Activated CD4-positive, alpha-beta memory T cell treated with anti-CD3 and anti-CD28 coated beads, Interleukin-2, amount 10 ng/mL, durations not matched to agents 7 days and 5 days (primary cell): ENCODE measurements at regions of chr1 and their contacts with region 1.

Region 1: DNA sequence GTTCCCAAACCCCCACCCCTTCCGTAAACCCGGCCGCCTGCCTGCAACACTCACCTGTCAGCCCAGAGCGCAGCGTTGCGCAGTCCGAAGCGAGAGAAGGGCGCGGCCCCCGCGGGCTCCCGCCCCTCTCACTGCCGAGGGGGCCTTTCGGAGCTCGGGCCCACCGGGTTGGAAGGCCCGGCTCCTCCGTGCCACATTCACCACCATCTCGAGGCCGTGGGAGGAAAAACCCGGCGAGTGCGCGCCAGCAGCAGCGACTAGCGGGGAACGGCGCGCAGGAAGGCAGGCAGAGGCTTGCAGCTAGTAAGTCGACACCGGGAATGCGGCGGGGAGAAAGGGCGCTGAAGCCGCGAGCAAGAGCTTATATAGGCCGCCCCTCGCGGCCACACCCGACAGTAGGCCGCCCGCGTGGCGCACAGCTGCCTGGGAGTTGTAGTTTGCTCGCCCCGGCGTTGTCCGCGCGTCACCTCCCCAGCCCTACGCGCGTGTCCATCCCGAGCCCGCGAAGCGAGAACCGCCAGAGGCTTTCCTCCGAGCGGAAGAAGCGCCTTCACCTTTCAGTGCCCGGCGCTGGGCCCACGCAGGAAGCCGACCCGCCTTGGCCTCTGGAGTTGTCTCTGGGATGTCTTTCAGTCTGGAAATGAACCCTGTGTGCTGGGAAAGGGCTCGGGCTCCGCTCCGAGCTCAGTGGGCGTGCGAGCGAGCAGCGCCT is 10.4 kb upstream of the RAB42 start:
- DNase-seq: peak; percentile 95
- H3K4me3 Mint-ChIP-seq: peak overlapping the region; percentile 92
- H3K27ac Mint-ChIP-seq: peak overlapping the region; percentile 92
- H3K4me1 Mint-ChIP-seq: peaks cover 38% of the 10 kb centered on the region
- H3K27me3 Mint-ChIP-seq: no peaks in the 10 kb centered on the region

Region 2: GRCh38 chr1:28235755-28236655 is 345.7 kb before region 1 on chr1 and contains the start of gene ATP5IF1:
- CTCF ChIA-PET with region 1: interaction called, 3 read pairs
- POLR2A ChIA-PET with region 1: interaction called, 11 read pairs
- DNase-seq: peak; percentile 96
- H3K4me3 Mint-ChIP-seq: no peak within 1 kb of the TSS
- H3K27ac Mint-ChIP-seq: no peak within 1 kb of the TSS
- H3K4me1 Mint-ChIP-seq: peaks cover 25% of the 10 kb centered on the region
- H3K27me3 Mint-ChIP-seq: no peaks in the 10 kb centered on the region
- total RNA-seq, gene ATP5IF1: 178 TPM

Region 3: GRCh38 chr1:28437934-28438699 is 143.6 kb before region 1 on chr1:
- CTCF ChIA-PET with region 1: no interaction called
- POLR2A ChIA-PET with region 1: no interaction called
- DNase-seq: no peak
- H3K4me3 Mint-ChIP-seq: no peak overlapping the region
- H3K27ac Mint-ChIP-seq: peak overlapping the region; percentile 3
- H3K4me1 Mint-ChIP-seq: peaks cover 16% of the 10 kb centered on the region
- H3K27me3 Mint-ChIP-seq: no peaks in the 10 kb centered on the region

Region 4: GRCh38 chr1:28449904-28450303 is 131.8 kb before region 1 on chr1:
- CTCF ChIA-PET with region 1: no interaction called
- POLR2A ChIA-PET with region 1: interaction called, 11 read pairs
- DNase-seq: peak; percentile 68
- H3K4me3 Mint-ChIP-seq: no peak overlapping the region
- H3K27ac Mint-ChIP-seq: peak overlapping the region; percentile 80
- H3K4me1 Mint-ChIP-seq: peaks cover 29% of the 10 kb centered on the region
- H3K27me3 Mint-ChIP-seq: no peaks in the 10 kb centered on the region

Region 5: GRCh38 chr1:28552758-28553663 is 28.7 kb before region 1 on chr1 and contains the start of gene TRNAU1AP:
- CTCF ChIA-PET with region 1: interaction called, 36 read pairs
- POLR2A ChIA-PET with region 1: interaction called, 185 read pairs
- DNase-seq: peak; percentile 98
- H3K4me3 Mint-ChIP-seq: peak within 1 kb of the TSS; percentile 92
- H3K27ac Mint-ChIP-seq: peak within 1 kb of the TSS; percentile 91
- H3K4me1 Mint-ChIP-seq: peaks cover 29% of the 10 kb centered on the region
- H3K27me3 Mint-ChIP-seq: no peaks in the 10 kb centered on the region
- total RNA-seq, gene TRNAU1AP: 56.9 to 58.9 TPM

Region 6: GRCh38 chr1:28602536-28603439 is 21.1 kb after region 1 on chr1:
- CTCF ChIA-PET with region 1: interaction called, 15 read pairs
- POLR2A ChIA-PET with region 1: interaction called, 51 read pairs
- DNase-seq: peak; percentile 25
- H3K4me3 Mint-ChIP-seq: no peak overlapping the region
- H3K27ac Mint-ChIP-seq: no peak overlapping the region
- H3K4me1 Mint-ChIP-seq: peaks cover 21% of the 10 kb centered on the region
- H3K27me3 Mint-ChIP-seq: no peaks in the 10 kb centered on the region

Region 7: DNA sequence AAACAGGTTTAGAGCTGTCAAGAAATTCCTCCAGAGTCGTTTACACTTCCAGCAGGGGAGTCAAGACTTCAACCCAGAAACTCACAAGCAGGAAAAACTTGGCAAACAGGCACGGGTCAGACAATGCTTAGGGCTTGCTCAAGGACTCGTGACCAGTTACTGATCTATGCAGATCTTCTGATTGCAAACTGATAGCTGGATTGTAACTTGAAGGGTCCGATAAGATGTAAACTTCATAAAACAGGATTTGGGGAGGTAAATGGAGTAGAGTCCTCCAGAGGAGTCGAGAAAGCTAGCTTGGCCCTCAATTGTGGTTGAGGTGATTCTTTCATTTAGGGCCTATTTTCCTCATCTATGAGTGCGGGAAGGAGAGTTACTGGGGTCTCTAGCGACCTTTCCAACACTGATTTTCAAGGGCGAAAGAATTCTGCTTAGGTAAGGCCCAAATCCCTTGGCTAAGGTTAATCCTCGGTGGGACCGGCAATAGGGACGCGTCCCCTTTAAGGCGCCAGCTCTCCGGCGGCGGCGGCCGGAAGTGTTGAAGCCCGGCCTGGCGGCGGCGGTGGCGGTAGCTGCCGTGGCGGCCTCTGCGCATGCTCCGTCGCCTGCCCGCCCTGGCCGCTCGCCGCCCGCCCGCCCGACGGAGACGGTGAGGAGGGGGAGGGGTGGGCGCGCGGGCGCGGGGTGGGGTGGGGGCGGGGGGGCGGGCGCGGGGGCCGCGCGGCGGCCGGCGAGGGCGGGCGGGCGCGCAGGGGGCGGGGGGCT is 86.7 kb after region 1 on chr1 and contains the start of gene GMEB1:
- CTCF ChIA-PET with region 1: no interaction called
- POLR2A ChIA-PET with region 1: interaction called, 63 read pairs
- DNase-seq: peak; percentile 89
- H3K4me3 Mint-ChIP-seq: peak within 1 kb of the TSS; percentile 92
- H3K27ac Mint-ChIP-seq: peak within 1 kb of the TSS; percentile 97
- H3K4me1 Mint-ChIP-seq: peaks cover 20% of the 10 kb centered on the region
- H3K27me3 Mint-ChIP-seq: no peaks in the 10 kb centered on the region
- total RNA-seq, gene GMEB1: 27.7 to 28.7 TPM

Region 8: DNA sequence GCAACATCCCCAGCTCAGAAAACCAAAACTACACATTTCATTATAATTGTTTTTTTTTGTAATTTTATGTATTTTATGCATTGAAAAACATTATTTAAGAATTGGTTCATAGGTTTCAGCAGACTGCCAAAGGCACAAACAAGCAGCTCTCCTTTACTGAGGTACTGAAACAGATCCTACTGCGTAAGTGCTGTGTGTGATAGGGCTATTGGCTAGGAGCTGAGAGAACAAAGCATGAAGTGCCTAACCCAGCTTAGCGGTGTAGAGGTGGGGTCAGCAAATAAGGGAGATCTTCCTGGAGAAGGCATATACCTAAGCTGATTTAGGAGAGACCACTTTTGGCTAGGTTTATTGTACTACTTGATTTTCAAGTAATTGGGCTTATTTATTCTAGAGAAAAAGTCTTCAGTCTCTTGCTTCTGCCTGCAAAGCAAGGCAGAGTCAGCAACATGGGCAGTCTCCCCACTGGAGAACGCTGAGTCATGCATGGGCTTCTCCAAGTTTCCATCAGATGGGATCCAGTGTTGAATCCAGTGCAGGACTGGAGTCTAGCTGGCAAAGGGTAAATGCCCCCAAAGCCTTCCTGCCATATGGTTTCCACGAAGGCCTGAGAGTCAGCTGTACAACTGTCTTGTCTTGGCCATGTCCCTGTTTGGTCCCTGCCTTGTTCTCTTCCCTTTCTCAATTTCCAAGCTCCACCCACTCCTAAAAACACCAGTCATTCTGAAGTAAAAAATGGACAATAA is 137.1 kb after region 1 on chr1:
- CTCF ChIA-PET with region 1: no interaction called
- POLR2A ChIA-PET with region 1: no interaction called
- DNase-seq: no peak
- H3K4me3 Mint-ChIP-seq: no peak overlapping the region
- H3K27ac Mint-ChIP-seq: no peak overlapping the region
- H3K4me1 Mint-ChIP-seq: peaks cover 2% of the 10 kb centered on the region
- H3K27me3 Mint-ChIP-seq: no peaks in the 10 kb centered on the region

Region 9: GRCh38 chr1:28796352-28797211 is 214.9 kb after region 1 on chr1:
- CTCF ChIA-PET with region 1: no interaction called
- POLR2A ChIA-PET with region 1: no interaction called
- DNase-seq: no peak
- H3K4me3 Mint-ChIP-seq: no peak overlapping the region
- H3K27ac Mint-ChIP-seq: no peak overlapping the region
- H3K4me1 Mint-ChIP-seq: peaks cover 5% of the 10 kb centered on the region
- H3K27me3 Mint-ChIP-seq: peaks cover 16% of the 10 kb centered on the region

Region 10: GRCh38 chr1:28914228-28915030 is 332.7 kb after region 1 on chr1 and contains the start of gene EPB41:
- CTCF ChIA-PET with region 1: no interaction called
- POLR2A ChIA-PET with region 1: interaction called, 11 read pairs
- DNase-seq: peak; percentile 90
- H3K4me3 Mint-ChIP-seq: peak within 1 kb of the TSS; percentile 89
- H3K27ac Mint-ChIP-seq: peak within 1 kb of the TSS; percentile 88
- H3K4me1 Mint-ChIP-seq: peaks cover 41% of the 10 kb centered on the region
- H3K27me3 Mint-ChIP-seq: no peaks in the 10 kb centered on the region
- total RNA-seq, gene EPB41: 95.0 to 97.6 TPM